CD4-positive, alpha-beta T cell (primary cell): ENCODE measurements at regions of chr14 and their contacts with region 1.

Region 1: GRCh38 chr14:22872033-22872832 is 693 bp downstream of the LRP10 start:
- DNase-seq: peak; percentile 51 to 84 (median 68)
- ATAC-seq: peak; percentile 35
- H3K4me3 ChIP-seq: peak overlapping the region; percentile 94
- H3K4me3 Mint-ChIP-seq: peak overlapping the region; percentile 93
- H3K27ac ChIP-seq: peak overlapping the region; percentile 93 to 98
- H3K27ac Mint-ChIP-seq: peak overlapping the region; percentile 87
- H3K4me1 ChIP-seq: peaks cover 62% of the 10 kb centered on the region
- H3K4me1 Mint-ChIP-seq: peaks cover 39% of the 10 kb centered on the region
- H3K27me3 ChIP-seq: no peaks in the 10 kb centered on the region
- H3K27me3 Mint-ChIP-seq: no peaks in the 10 kb centered on the region
- CTCF ChIP-seq: peak; percentile 93

Region 2: DNA sequence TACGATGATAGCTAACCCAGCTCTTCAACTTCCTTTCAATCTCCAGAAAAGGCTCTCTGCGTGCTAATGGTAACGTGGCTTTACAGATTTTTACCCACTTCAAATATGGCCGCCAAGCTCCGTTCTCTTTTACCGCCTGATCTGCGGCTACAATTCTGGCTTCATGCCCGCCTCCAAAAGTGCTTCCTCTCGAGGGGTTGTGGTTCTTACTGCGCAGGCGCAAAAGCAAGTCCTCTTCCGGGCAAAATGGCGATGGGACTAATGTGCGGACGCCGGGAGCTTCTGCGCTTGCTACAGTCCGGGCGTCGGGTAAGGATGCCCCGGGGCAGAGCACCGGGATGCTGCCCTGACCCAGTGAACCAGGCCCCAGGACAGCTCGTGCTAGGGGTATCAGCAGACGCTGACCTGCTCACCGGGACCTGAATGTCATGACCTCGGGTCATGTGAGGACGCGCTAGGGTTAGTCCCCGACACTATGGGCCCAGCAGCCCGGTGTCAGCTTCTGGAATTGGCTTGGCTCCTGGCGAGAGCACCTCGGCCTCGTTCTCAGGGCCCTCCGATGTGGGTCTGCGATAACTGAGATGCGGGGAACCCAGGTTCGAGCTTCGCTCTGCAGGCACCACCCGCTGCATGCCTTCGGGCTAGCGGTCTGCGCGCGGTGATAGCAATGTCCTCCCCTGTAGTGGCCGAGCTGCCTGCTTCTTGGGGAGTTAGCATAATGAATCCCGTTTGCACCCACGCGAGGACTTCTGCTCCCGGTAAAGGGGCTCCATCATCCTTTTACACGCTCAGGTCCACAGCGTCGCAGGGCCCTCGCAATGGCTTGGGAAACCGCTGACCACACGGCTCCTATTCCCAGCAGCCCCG is 105.5 kb before region 1 on chr14 and contains the start of gene OXA1L:
- CTCF ChIA-PET with region 1: interaction called, 5 read pairs
- POLR2A ChIA-PET with region 1: interaction called, 10 read pairs
- intact Hi-C with region 1: no loop called
- DNase-seq: peak; percentile 86 to 99 (median 96)
- ATAC-seq: peak; percentile 94
- H3K4me3 ChIP-seq: peak within 1 kb of the TSS; percentile 87
- H3K4me3 Mint-ChIP-seq: peak within 1 kb of the TSS; percentile 85
- H3K27ac ChIP-seq: peak within 1 kb of the TSS; percentile 80
- H3K27ac Mint-ChIP-seq: peak within 1 kb of the TSS; percentile 88
- H3K4me1 ChIP-seq: peaks cover 23% of the 10 kb centered on the region
- H3K4me1 Mint-ChIP-seq: peaks cover 33% of the 10 kb centered on the region
- H3K27me3 ChIP-seq: no peaks in the 10 kb centered on the region
- H3K27me3 Mint-ChIP-seq: no peaks in the 10 kb centered on the region
- CTCF ChIP-seq: no peak
- total RNA-seq, gene OXA1L: 176 to 177 TPM

Region 3: GRCh38 chr14:22829661-22830442 is 42.4 kb before region 1 on chr14 and contains the start of gene MRPL52:
- CTCF ChIA-PET with region 1: no interaction called
- POLR2A ChIA-PET with region 1: interaction called, 16 read pairs
- intact Hi-C with region 1: no loop called
- DNase-seq: peak; percentile 84 to 97 (median 89)
- ATAC-seq: peak; percentile 94
- H3K4me3 ChIP-seq: peak within 1 kb of the TSS; percentile 78
- H3K4me3 Mint-ChIP-seq: peak within 1 kb of the TSS; percentile 85
- H3K27ac ChIP-seq: peak within 1 kb of the TSS; percentile 79 to 89
- H3K27ac Mint-ChIP-seq: peak within 1 kb of the TSS; percentile 89
- H3K4me1 ChIP-seq: peaks cover 22% of the 10 kb centered on the region
- H3K4me1 Mint-ChIP-seq: peaks cover 33% of the 10 kb centered on the region
- H3K27me3 ChIP-seq: peaks cover 0 to 3% of the 10 kb centered on the region in 2 experiments
- H3K27me3 Mint-ChIP-seq: peaks cover 5% of the 10 kb centered on the region
- CTCF ChIP-seq: no peak
- total RNA-seq, gene MRPL52: 27.6 to 29.4 TPM

Region 4: DNA sequence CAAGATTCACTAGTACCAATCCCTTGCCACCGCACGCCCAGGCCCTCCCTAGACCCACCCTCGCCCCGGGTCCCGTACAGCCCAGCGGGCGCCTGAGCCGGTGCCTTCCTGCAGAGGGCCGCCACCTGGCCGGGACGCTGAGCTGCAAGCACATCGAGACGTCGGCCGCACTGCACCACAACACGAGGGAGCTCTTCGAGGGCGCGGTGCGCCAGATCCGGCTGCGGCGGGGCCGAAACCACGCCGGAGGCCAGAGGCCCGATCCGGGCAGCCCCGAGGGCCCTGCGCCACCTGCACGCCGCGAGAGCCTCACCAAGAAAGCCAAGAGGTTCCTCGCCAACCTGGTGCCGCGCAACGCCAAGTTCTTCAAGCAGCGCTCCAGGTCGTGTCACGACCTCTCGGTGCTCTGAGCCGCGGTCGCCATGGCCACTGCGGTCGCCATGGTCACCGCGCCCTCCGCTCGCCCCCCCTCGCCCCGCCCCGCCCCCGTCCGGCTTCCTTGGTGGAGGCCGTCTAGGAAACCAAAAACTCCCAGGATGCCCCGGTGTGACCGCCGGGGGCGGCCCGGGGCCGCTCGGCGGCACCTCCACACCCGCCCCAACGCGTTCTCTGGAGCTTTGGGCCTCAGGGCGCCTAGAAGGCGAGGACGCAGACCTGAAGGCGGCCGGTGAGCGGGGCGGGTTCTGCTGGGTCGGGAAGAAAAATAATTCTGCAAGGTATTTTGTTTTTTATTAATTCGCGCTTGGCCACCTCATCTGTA is 14.4 kb after region 1 on chr14:
- CTCF ChIA-PET with region 1: interaction called, 67 read pairs
- POLR2A ChIA-PET with region 1: interaction called, 97 read pairs
- intact Hi-C with region 1: loop called (anchors 1 to 2 kb)
- DNase-seq: peak; percentile 59 to 90 (median 75)
- ATAC-seq: peak; percentile 63
- H3K4me3 ChIP-seq: peak overlapping the region; percentile 71
- H3K4me3 Mint-ChIP-seq: peak overlapping the region; percentile 95
- H3K27ac ChIP-seq: peak overlapping the region; percentile 65 to 84
- H3K27ac Mint-ChIP-seq: peak overlapping the region; percentile 93
- H3K4me1 ChIP-seq: peaks cover 67% of the 10 kb centered on the region
- H3K4me1 Mint-ChIP-seq: peaks cover 75% of the 10 kb centered on the region
- H3K27me3 ChIP-seq: no peaks in the 10 kb centered on the region
- H3K27me3 Mint-ChIP-seq: no peaks in the 10 kb centered on the region
- CTCF ChIP-seq: peak; percentile 33

Region 5: DNA sequence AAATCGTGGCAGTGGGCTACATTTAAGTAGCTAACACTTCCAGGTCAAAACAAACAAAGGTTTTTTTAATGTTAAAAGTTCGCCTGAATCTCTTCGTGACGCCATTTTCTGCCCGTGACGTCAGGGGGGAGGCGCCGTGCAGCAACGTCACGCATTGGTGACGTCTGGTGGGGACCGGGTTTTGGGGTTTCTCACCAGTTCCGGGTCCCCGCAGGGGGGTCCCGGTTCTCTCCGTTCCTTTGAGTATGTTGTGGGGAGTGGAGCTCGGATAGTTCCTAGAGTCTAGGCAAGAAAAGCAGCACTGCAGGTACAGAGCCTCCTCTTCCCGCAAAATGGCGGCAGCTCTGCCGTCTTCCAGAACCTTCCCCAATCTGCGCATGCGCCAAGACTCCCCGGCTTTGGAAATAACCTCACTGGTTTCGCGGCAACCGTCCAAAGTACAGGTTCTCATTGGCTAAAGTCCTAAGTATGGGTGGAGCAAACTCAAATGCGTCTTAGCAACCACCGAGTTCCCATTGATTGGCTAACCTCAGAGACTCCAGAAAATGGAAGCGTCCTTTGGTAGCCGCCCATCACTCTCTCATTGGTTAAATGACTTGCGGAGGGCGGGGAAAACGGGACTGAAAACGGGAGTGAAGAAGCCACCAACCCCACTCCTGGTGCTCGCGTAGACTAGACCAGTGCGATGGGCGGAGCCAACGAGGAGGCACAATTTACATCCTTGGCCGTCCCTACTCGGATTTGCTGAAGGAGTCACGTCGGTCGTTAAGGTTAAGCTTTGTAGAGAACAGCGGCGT is 46.8 kb after region 1 on chr14 and contains the start of gene RBM23:
- CTCF ChIA-PET with region 1: interaction called, 7 read pairs
- POLR2A ChIA-PET with region 1: interaction called, 9 read pairs
- intact Hi-C with region 1: loop called (anchors 1 kb)
- DNase-seq: peak; percentile 99 to 100 (median 100)
- ATAC-seq: peak; percentile 84
- H3K4me3 ChIP-seq: peak within 1 kb of the TSS; percentile 74
- H3K4me3 Mint-ChIP-seq: peak within 1 kb of the TSS; percentile 88
- H3K27ac ChIP-seq: peak within 1 kb of the TSS; percentile 99 to 100
- H3K27ac Mint-ChIP-seq: peak within 1 kb of the TSS; percentile 100
- H3K4me1 ChIP-seq: peaks cover 38% of the 10 kb centered on the region
- H3K4me1 Mint-ChIP-seq: peaks cover 50% of the 10 kb centered on the region
- H3K27me3 ChIP-seq: no peaks in the 10 kb centered on the region
- H3K27me3 Mint-ChIP-seq: peaks cover 4% of the 10 kb centered on the region
- CTCF ChIP-seq: no peak
- total RNA-seq, gene RBM23: 87.9 to 111 TPM